ENCODE measurements at regions of chr11 and their contacts with region 1.

Region 1: DNA sequence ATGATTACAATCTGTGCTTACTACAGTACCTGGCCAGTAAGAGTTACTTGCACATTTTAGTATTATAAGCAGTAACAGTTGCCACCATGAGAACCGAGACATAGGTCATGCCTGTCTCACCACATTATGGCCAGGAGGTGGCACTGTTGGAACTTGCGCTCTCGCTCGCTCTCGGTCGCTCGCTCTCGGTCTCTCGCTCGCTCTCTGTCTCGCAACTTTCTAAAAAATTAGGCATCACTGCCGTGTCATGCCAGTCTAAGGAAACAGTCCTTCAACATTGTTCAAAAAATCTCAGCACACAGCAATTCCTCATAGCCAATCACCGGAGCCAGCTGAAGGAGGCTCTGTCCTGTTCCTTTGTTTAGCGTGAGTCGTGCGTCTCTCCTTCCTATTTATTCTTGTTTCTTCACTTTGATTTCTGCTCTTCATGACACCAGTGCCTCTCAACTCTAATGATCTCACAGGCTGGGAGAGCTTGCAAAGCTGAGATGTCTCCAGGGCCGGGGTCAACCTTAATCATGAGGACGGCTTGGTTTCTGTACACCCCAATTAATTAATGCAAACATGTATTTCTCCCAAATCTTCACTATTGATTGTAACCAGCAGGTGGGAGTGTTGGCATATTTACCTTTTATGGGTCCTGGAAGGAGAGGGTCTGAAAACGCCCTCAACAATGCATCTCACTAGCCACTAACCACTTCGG is 6.3 kb upstream of the ADAMTS8 start:
- DNase-seq: peak; percentile 69 to 84
- H3K4me3 ChIP-seq: peak overlapping the region; percentile 69
- H3K27ac ChIP-seq: peak overlapping the region; percentile 34; the same call in 1 of the 2 replicates
- H3K4me1 ChIP-seq: 0 out of 2 replicates have a peak, but pooled peaks cover 4% of the 10 kb centered on the region
- H3K27me3 ChIP-seq: peaks cover 10% of the 10 kb centered on the region; the same call in 1 of the 2 replicates
- CTCF ChIP-seq: peak; percentile 86

Region 2: DNA sequence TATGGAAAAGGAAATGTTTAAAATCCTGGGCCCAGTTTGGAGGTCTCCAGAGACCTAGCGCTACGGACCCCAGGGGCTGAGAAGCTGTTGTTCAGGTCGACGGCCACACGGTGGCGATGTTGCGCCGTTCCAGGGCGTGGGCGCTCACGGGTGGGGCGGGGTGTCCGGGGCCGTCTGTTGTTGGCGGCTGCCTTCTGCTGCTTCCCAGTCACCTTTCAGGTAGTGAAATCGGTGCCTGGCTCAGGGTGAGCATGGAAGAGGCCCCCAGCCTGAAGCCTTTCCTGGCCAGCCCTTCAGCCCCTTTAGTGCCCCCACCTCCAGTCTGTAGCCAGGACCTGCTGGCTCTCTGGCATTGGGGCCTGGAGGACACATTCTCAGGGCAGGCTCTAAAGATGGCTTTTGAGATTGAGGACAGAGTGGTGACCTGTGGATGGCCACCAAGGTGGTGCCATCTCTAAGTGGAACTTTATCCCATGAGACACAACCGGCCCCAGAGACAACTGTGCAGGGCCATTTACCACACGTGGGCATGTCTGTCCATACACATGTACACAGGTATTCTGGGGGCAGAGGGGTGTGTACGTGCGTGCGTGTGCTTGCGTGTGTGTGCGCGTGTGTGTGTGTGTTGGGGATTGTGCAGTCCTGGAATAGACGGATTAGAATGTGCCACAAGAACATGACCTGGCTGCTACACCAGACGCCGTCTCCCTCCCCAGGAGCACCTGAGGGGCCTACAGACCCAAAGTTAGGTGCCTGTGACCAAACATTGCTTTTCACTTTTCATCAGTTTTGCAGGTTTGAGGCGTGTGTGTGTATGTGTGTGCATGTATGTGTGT is 221.3 kb before region 1 on chr11:
- CTCF ChIA-PET with region 1: interaction called, 15 read pairs
- POLR2A ChIA-PET with region 1: no interaction called
- intact Hi-C with region 1: loop called (anchors 1 kb)
- DNase-seq: peak in 1 of 2 experiments; percentile 56
- H3K4me3 ChIP-seq: no peak overlapping the region
- H3K27ac ChIP-seq: no peak overlapping the region
- H3K4me1 ChIP-seq: no peaks in the 10 kb centered on the region
- H3K27me3 ChIP-seq: no peaks in the 10 kb centered on the region
- CTCF ChIP-seq: peak; percentile 98

Region 3: GRCh38 chr11:130413405-130414106 is 21.1 kb before region 1 on chr11:
- CTCF ChIA-PET with region 1: no interaction called
- POLR2A ChIA-PET with region 1: no interaction called
- intact Hi-C with region 1: no loop called
- DNase-seq: peak in 1 of 2 experiments; percentile 50
- H3K4me3 ChIP-seq: no peak overlapping the region
- H3K27ac ChIP-seq: no peak overlapping the region
- H3K4me1 ChIP-seq: no peaks in the 10 kb centered on the region
- H3K27me3 ChIP-seq: peaks cover 21% of the 10 kb centered on the region; the same call in 1 of the 2 replicates
- CTCF ChIP-seq: no peak

Region 4: GRCh38 chr11:130478204-130478701 is 43.6 kb after region 1 on chr11:
- CTCF ChIA-PET with region 1: interaction called, 11 read pairs
- POLR2A ChIA-PET with region 1: no interaction called
- intact Hi-C with region 1: no loop called
- DNase-seq: peak; percentile 72 to 75
- H3K4me3 ChIP-seq: peak overlapping the region; percentile 10; the same call in 1 of the 2 replicates
- H3K27ac ChIP-seq: peak overlapping the region; percentile 70
- H3K4me1 ChIP-seq: peaks cover 28% of the 10 kb centered on the region
- H3K27me3 ChIP-seq: no peaks in the 10 kb centered on the region
- CTCF ChIP-seq: no peak

Region 5: GRCh38 chr11:130636722-130637517 is 202.2 kb after region 1 on chr11:
- CTCF ChIA-PET with region 1: no interaction called
- POLR2A ChIA-PET with region 1: no interaction called
- intact Hi-C with region 1: loop called (anchors 1 kb)
- DNase-seq: peak; percentile 52 to 96
- H3K4me3 ChIP-seq: peak overlapping the region; percentile 37; the same call in 1 of the 2 replicates
- H3K27ac ChIP-seq: peak overlapping the region; percentile 90
- H3K4me1 ChIP-seq: peaks cover 74% of the 10 kb centered on the region
- H3K27me3 ChIP-seq: no peaks in the 10 kb centered on the region
- CTCF ChIP-seq: no peak

Region 6: DNA sequence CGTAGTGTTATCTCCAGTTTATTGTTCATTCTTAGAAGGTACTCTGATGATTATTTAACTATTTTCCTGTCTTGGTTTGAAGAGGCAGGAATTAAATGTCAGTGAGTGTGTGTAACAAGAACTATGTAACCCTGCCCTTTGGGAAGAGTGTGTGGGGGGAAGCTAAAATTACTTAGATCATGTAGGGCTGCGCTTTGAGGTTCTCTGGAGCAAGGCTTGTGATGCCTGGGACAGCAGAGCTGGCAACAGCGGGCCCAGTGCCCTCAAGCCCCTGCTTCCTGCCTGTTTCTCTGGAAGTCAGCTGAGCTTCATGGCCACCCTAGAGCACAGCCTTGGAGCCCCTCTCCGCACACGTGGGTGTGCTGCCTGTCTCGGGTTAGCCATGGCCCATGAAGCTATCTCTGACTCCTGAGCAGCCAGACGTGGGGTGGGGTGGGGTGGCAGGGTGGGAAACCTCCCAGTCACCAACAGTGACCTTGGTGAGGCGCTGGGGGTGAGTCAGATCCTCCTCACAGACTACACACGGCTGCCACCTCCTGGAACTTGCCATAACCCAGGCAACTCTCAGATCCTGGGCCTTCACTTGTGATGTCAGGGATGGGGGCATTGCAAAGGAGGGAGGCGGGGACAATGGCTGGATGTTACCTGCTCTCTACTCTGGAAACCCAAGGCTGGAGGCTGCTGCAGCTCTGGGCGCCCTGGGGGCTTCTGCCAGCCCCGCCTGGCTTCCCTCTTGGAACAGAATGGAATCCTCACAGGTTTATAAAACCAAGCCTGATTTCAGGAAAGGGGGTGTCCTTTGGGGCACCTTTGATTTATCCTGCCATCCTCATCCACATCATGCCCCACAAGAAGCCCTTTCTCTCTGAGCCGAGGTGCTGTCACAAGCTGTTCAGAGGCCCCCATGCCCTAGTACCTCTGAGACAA is 393.0 kb after region 1 on chr11:
- CTCF ChIA-PET with region 1: interaction called, 3 read pairs
- POLR2A ChIA-PET with region 1: no interaction called
- intact Hi-C with region 1: loop called (anchors 1 kb)
- DNase-seq: peak; percentile 51 to 55
- H3K4me3 ChIP-seq: no peak overlapping the region
- H3K27ac ChIP-seq: no peak overlapping the region
- H3K4me1 ChIP-seq: 0 out of 2 replicates have a peak, but pooled peaks cover 4% of the 10 kb centered on the region
- H3K27me3 ChIP-seq: no peaks in the 10 kb centered on the region
- CTCF ChIP-seq: peak; percentile 70

Measured in PC-9 (cell line).